Heart right ventricle (tissue), 16 donors: ENCODE measurements at regions of chr3 and their contacts with region 1.

Region 1: DNA sequence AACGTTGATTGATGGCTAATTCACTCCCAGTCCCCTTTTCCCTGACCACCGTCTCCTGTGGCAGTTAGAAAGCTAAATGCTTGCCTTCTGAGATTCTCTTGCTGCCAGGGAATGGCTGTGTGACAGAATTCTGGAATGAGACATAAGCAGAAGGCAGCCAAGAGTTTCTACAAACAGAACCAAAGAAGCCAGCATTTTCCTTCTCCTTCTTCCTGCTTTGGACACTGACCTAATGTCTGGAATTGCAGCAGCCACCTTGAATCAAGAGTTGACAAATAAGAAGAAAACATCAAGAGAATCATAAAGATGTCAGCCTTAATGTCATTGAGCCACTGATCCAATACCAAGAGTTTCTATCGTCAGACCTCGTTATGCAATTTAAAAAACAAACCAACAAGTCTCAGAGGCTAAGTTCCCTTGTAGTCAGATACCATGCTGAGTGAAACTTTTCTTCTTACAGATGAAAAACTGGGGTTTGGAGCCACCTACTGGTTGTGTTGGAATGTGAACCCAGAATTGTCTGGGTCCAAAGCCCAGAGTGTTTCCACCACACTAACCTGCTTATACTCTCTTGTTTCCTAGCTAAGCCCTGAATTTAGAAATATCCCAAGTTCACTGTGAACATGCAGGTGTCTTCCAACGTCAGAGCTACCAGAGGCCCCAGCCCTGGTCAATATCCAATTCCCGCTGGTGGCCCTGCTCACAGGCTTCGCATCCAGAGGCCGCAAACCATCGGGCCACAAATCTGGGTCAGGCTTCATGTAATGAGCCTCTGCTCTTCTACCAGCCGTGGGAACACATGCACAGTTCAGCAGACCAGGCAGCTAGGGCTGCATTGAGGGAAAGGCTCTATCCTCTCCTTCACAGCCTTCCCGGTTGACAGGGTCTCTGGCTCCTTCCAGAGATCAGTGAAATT is 42.5 kb downstream of the MCF2L2 start:
- DNase-seq: peak in 1 of 2 donors; percentile 55
- ATAC-seq: peak; percentile 53 to 91 (median 79)
- H3K4me3 ChIP-seq: no peak overlapping the region
- H3K27ac ChIP-seq: no peak overlapping the region
- H3K4me1 ChIP-seq: peaks cover 0 to 19% (median 0%) of the 10 kb centered on the region in 9 donors
- H3K27me3 ChIP-seq: no peaks in the 10 kb centered on the region
- CTCF ChIP-seq: peak; percentile 39 to 79 (median 77)

Region 2: DNA sequence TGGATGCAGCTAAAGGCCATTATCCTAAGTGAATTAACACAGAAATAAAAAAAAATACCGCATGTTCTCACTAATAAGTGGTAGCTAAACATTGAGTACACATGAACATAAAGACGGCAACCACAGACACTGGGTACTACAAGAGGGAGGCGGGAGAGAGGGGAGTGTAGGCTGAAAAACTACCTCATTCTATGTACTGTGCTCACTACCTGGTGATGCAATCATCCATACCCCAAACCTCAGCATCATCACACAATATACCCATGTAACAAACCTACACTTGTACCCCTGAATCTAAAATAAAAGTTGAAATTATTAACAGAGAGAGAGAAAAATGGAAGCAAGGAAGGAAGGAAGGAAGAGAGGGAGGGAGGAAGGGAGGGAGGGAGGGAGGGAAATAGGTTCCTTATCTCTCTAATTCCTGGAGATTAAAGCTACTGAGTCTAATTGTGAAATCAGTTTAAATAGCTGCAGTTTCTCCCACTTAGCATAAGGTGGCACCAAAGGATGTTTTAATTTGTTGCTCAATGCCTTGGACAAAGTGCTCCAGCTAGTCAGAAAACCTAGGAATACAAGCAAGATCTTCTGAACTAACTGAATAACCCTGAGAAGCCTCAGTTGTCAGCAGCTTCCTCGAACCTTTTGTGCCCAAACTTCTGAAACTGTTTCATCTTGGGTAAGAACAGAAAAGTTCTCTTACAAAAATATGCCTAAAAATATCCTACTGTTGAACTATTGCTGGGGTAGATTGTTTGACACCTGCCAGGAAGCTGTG is 672.0 kb before region 1 on chr3:
- intact Hi-C with region 1: loop called in 1 of 10 experiments (anchors 10 kb)
- DNase-seq: no peak
- ATAC-seq: peak; percentile 61 to 90 (median 80)
- H3K4me3 ChIP-seq: no peak overlapping the region
- H3K27ac ChIP-seq: no peak overlapping the region
- H3K4me1 ChIP-seq: peaks cover 0 to 14% (median 6%) of the 10 kb centered on the region in 9 donors
- H3K27me3 ChIP-seq: no peaks in the 10 kb centered on the region
- CTCF ChIP-seq: peak; percentile 34 to 74 (median 61)

Region 3: DNA sequence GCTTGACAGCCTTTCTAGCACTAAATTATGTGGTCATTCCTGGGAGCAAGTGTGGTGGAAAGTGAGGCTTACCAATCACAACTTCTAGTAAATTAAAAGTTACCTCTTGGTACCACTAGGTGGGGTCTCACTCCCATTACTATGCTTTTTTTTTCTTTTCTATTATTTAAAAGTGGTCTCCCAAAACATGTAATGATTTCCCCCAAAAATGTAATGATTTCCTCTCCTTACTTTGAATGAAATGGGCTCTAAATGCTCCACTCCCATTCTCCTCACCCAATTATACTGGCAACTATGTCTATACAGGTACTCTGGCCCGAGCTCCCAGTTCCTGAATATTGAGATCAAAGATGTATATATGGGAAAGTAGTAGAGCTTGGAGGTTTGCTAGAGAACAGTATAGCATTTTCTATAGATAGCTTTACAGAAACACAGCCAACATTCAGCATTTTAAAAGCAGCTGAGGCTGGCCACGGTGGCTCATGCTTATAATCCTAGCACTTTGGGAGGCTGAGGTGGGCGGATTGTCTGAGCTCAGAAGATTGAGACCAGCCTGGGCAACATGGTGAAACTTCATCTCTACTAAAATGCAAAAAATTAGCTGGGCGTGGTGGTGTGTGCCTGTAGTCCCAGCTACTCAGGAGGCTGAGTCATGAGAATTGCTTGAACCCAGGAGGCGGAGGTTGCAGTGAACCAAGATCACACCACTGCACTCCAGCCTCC is 476.5 kb before region 1 on chr3:
- intact Hi-C with region 1: loop called in 1 of 10 experiments (anchors 10 kb)
- DNase-seq: no peak
- ATAC-seq: no peak
- H3K4me3 ChIP-seq: no peak overlapping the region
- H3K27ac ChIP-seq: no peak overlapping the region
- H3K4me1 ChIP-seq: peaks cover 0 to 6% (median 0%) of the 10 kb centered on the region in 9 donors
- H3K27me3 ChIP-seq: no peaks in the 10 kb centered on the region
- CTCF ChIP-seq: peak; percentile 22 to 58 (median 48)

Region 4: DNA sequence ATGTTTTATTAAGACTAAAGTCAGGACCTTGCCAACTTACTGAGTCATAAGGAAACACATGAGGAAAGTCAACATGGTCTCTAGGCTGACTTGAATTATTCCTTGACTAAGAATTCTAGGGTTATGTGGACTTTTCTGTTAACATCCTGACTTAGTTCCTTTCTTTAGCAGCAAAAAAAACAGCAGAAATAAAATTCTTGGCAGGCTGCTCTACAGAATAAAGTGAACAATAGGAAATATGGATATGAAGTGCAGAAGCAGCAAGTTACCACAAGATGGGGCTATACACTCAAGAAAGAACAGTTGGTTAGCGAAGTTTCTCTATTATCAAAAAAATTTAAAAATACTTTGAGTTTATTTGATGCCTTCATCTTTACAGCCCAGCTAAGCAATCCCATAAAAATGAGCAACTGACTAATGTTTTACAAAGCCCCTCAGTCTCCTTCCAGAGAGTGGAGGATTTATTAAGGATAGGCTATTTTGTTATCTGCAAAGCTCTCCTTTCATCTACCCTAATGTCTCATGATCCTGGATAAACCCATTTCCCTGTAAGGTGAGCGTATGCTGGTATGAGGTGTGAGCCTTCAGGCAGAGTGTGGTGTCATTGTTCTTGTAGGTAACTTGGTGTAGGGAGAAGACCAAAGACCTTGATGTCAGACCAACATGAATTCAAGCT is 263.6 kb before region 1 on chr3:
- intact Hi-C with region 1: loop called (anchors 1 to 5 kb)
- DNase-seq: no peak
- ATAC-seq: peak in 3 of 8 donors; percentile 22 to 60 (median 57)
- H3K4me3 ChIP-seq: no peak overlapping the region
- H3K27ac ChIP-seq: no peak overlapping the region
- H3K4me1 ChIP-seq: peaks cover 0 to 8% (median 0%) of the 10 kb centered on the region in 9 donors
- H3K27me3 ChIP-seq: peaks cover 0 to 22% (median 12%) of the 10 kb centered on the region in 7 donors
- CTCF ChIP-seq: peak; percentile 67 to 92 (median 86)

Region 5: GRCh38 chr3:183178629-183179549 is 207.1 kb before region 1 on chr3:
- intact Hi-C with region 1: loop called in 9 of 10 experiments (anchors 1 to 2 kb)
- DNase-seq: peak in 1 of 2 donors; percentile 30
- ATAC-seq: peak; percentile 53 to 72 (median 67)
- H3K4me3 ChIP-seq: peak overlapping the region; percentile 34 to 62 (median 57)
- H3K27ac ChIP-seq: no peak overlapping the region
- H3K4me1 ChIP-seq: peaks cover 0 to 23% (median 17%) of the 10 kb centered on the region in 9 donors
- H3K27me3 ChIP-seq: peaks cover 0 to 66% (median 53%) of the 10 kb centered on the region in 7 donors
- CTCF ChIP-seq: peak in 4 of 9 donors; percentile 12 to 34 (median 32)

Region 6: DNA sequence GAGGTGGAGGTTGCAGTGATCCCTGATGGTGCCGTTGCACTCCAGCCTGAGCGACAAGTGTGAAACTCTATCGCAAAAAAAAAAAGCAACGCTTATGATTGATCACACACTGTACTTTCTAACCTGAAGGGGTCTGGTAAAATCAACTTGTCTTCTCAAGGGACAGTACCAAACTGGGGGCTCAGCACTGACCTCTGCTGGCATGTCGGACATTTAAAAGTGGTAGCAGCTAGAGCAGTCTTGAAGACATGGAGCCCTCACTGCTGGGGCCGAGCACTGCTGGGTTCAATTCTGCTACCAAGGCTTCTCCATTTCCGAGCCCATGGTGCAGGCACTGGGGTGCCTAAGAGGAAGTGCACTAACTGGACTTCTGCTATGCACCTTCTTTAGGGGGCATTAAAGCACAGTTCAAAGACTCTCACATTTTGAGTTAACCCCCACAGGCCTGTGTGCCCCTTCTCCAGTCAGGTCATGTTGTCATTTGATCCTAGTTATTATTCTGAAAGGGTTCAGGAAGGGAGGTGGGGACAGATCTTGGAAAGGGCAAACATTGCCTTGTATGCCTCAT is 197.0 kb before region 1 on chr3:
- intact Hi-C with region 1: loop called (anchors 1 to 2 kb)
- DNase-seq: peak in 1 of 2 donors; percentile 44
- ATAC-seq: peak in 5 of 8 donors; percentile 27 to 59 (median 41)
- H3K4me3 ChIP-seq: no peak overlapping the region
- H3K27ac ChIP-seq: no peak overlapping the region
- H3K4me1 ChIP-seq: peaks cover 0 to 20% (median 0%) of the 10 kb centered on the region in 9 donors
- H3K27me3 ChIP-seq: peaks cover 0 to 4% (median 0%) of the 10 kb centered on the region in 7 donors
- CTCF ChIP-seq: peak in 7 of 9 donors; percentile 29 to 60 (median 43)

Region 7: GRCh38 chr3:183447206-183448001 is 61.4 kb after region 1 on chr3:
- intact Hi-C with region 1: no loop called
- DNase-seq: peak; percentile 85 to 92
- ATAC-seq: peak; percentile 86 to 94 (median 92)
- H3K4me3 ChIP-seq: peak overlapping the region; percentile 64 to 89 (median 74)
- H3K27ac ChIP-seq: peak overlapping the region; percentile 66 to 92 (median 85)
- H3K4me1 ChIP-seq: peaks cover 0 to 29% (median 21%) of the 10 kb centered on the region in 9 donors
- H3K27me3 ChIP-seq: no peaks in the 10 kb centered on the region
- CTCF ChIP-seq: peak in 1 of 9 donors; percentile 7

Region 8: DNA sequence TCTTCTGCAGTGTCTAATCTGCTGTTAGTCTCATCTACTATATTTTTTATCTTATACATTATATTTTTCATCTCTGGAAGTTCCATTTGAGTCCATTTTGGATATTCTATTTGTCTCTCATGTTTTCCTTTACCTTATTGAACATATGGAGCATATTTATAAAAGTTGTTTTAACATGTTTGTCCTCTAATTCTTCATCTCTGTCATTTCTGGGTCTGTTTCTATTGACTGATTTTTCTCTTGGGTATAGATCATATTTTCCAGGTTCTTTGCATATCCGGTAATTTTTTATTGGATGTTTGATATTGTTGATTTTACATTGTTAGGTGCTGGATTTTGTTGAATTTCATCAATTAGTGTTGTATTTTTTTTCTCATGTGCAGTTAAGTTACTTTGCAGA is 212.0 kb after region 1 on chr3:
- intact Hi-C with region 1: no loop called
- DNase-seq: no peak
- ATAC-seq: no peak
- H3K4me3 ChIP-seq: no peak overlapping the region
- H3K27ac ChIP-seq: no peak overlapping the region
- H3K4me1 ChIP-seq: no peaks in the 10 kb centered on the region
- H3K27me3 ChIP-seq: no peaks in the 10 kb centered on the region
- CTCF ChIP-seq: no peak